ENCODE measurements at regions of chrX and their contacts with region 1.

Region 1: DNA sequence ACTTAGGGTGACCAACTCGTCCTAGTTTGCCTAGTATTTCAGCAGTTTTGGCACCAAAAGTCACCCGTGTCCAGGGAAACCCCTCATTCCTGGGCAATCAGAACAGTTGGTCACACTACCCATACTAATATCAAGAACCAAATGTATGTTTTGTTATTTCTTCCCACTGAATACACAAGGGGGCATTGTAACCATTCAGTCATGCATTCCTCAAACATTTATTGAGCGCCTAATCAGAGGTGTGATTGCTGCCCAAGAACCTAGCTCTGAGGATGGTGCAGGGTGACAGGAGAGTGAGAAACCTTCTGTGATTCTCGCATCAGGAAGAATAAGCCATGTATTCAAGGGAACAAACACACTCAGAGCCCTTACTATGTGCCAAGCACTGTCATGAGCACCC is 69.8 kb upstream of the RAI2 start:
- DNase-seq: no peak
- ATAC-seq: no peak
- H3K4me3 ChIP-seq: no peak overlapping the region
- H3K27ac ChIP-seq: no peak overlapping the region
- H3K4me1 ChIP-seq: no peaks in the 10 kb centered on the region
- H3K27me3 ChIP-seq: no peaks in the 10 kb centered on the region
- CTCF ChIP-seq: no peak

Region 2: DNA sequence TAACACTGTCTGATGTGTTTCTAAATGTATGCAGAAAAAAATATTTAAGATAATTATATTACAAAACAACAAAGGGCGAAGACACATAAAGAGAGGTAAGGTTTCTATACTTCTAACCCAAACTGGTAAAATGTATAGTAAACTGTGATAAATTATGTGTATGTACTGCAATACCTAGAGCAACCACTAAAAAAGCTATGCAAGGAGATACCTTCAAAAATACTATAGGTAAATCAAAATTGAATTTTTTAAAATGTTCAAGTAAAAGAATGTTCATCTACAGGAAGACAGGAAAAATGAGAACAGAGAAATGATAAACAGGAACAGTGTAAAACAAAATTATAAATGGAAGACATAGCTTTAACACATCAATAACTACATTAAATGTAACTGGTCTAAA is 42.4 kb before region 1 on chrX:
- intact Hi-C with region 1: loop called in 1 of 2 experiments (anchors 1 kb)
- DNase-seq: no peak
- ATAC-seq: no peak
- H3K4me3 ChIP-seq: no peak overlapping the region
- H3K27ac ChIP-seq: no peak overlapping the region
- H3K4me1 ChIP-seq: no peaks in the 10 kb centered on the region
- H3K27me3 ChIP-seq: peaks cover 0 to 2% (median 0%) of the 10 kb centered on the region in 3 donors
- CTCF ChIP-seq: peak; percentile 9

Region 3: DNA sequence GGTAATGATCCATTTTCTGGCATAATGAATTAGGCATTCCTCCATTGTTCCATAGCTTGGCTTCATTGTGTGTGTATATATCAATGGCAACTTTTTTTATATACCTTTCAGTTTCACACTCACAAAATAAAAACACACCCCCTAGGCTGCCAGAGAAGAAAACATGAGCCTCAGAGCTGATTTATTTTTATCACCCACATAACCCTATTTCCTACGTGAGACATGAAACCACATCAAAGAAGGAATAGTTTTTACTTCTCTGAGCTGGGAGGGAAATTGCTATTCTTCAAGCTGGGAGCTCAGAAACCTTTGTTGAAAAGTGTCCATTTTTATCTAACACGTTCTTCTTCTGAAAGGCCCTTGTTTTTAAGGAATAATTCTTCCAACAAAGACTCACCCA is 56.9 kb after region 1 on chrX:
- intact Hi-C with region 1: no loop called
- DNase-seq: no peak
- ATAC-seq: no peak
- H3K4me3 ChIP-seq: no peak overlapping the region
- H3K27ac ChIP-seq: no peak overlapping the region
- H3K4me1 ChIP-seq: no peaks in the 10 kb centered on the region
- H3K27me3 ChIP-seq: peaks cover 0 to 3% (median 0%) of the 10 kb centered on the region in 3 donors
- CTCF ChIP-seq: no peak

Measured in psoas muscle (tissue), 8 donors.